CD4-positive, alpha-beta memory T cell (primary cell): ENCODE measurements at regions of chr2 and their contacts with region 1.

Region 1: GRCh38 chr2:63444565-63445295 is 143.5 kb downstream of the WDPCP start:
- DNase-seq: no peak
- H3K4me3 ChIP-seq: no peak overlapping the region
- H3K4me3 Mint-ChIP-seq: peak overlapping the region in 7 of 8 donors; percentile 14 to 76 (median 47)
- H3K27ac ChIP-seq: no peak overlapping the region
- H3K27ac Mint-ChIP-seq: peak overlapping the region in 3 of 7 donors; percentile 18 to 57 (median 30)
- H3K4me1 ChIP-seq: no peaks in the 10 kb centered on the region
- H3K4me1 Mint-ChIP-seq: peaks cover 0 to 11% (median 5%) of the 10 kb centered on the region in 4 donors
- H3K27me3 ChIP-seq: no peaks in the 10 kb centered on the region
- H3K27me3 Mint-ChIP-seq: no peaks in the 10 kb centered on the region

Region 2: DNA sequence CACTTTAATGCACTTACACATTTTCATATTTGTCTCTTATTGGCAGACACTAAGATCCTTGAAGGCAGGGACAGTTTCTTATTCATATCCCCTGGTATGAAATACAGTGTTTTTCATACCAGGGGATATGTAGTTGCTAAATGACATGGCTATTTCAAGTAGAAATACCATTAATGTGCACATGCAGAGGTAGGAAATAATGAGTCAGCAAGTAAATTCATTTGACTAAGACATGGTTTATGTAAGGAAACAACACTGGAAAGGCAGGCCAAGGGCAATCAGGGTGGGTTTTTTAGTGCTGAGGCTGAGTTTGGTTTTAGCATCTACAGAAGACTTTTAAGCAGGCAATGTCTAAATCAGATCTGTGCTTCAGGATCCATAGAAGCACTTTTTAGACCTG is 12.4 kb before region 1 on chr2:
- CTCF ChIA-PET with region 1: no interaction called
- POLR2A ChIA-PET with region 1: no interaction called
- intact Hi-C with region 1: loop called (anchors 1 kb)
- DNase-seq: no peak
- H3K4me3 ChIP-seq: no peak overlapping the region
- H3K4me3 Mint-ChIP-seq: no peak overlapping the region
- H3K27ac ChIP-seq: no peak overlapping the region
- H3K27ac Mint-ChIP-seq: no peak overlapping the region
- H3K4me1 ChIP-seq: no peaks in the 10 kb centered on the region
- H3K4me1 Mint-ChIP-seq: no peaks in the 10 kb centered on the region
- H3K27me3 ChIP-seq: no peaks in the 10 kb centered on the region
- H3K27me3 Mint-ChIP-seq: no peaks in the 10 kb centered on the region